Upper lobe of right lung (tissue), 1 donor: ENCODE measurements at regions of chr20 and their contacts with region 1.

Region 1: GRCh38 chr20:62302341-62303058 is at the start of gene ADRM1:
- DNase-seq: peak; percentile 98
- ATAC-seq: peak; percentile 92
- H3K4me3 ChIP-seq: peak within 1 kb of the TSS; percentile 83
- H3K27ac ChIP-seq: peak within 1 kb of the TSS; percentile 97
- H3K4me1 ChIP-seq: peaks cover 22% of the 10 kb centered on the region
- H3K27me3 ChIP-seq: no peaks in the 10 kb centered on the region
- CTCF ChIP-seq: peak; percentile 94
- total RNA-seq, gene ADRM1: 73.4 TPM

Region 2: DNA sequence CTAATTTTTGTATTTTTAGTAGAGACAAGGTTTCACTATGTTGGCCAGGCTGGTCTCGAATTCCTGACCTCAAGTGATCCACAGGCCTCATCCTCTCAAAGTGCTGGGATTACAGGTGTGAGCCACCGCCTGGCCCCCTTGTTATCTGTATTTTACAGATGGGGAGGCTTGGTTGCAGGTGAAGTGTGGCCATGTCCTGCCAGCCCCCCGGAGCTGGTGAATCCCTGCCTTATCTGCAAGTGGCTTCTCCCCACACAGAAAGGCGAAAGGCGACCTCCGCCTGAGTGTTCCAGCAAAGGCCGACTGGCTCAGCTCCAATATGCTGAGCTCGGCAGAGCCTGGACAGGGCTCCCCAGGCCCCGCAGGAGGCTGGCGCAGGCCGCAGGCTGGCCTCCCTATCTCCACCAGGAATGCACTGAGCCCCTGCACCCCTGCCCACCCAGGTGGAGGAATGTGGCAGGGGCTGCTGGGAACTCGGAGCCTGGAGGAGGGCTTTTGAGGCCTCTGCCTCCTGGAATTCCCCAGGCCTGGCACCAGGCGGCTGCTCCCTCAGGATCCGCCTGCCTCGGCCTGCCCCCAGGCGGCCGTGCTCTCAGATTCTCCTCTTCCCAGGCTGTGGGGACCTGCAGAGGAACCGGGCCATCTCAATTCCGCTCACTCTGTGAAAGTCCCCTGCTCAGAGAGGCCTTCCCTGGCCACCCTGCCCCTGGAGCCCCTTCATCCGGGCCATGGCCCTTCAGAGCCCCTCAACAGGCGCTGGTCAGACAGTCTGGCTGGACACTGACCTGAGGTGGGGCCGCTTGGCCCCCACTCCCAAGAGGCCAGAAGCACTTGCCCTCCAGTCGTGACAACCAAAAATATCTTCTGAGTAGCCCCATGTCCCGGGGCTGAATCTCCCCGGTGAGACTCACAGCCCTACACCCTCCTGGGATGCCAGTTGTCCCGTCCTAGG is 73.9 kb after region 1 on chr20:
- intact Hi-C with region 1: loop called (anchors 5 kb)
- DNase-seq: no peak
- ATAC-seq: peak; percentile 76
- H3K4me3 ChIP-seq: no peak overlapping the region
- H3K27ac ChIP-seq: peak overlapping the region; percentile 39
- H3K4me1 ChIP-seq: peaks cover 46% of the 10 kb centered on the region
- H3K27me3 ChIP-seq: no peaks in the 10 kb centered on the region
- CTCF ChIP-seq: peak; percentile 52